CD8-positive, alpha-beta T cell (primary cell): ENCODE measurements at regions of chr11 and their contacts with region 1.

Region 1: GRCh38 chr11:113773416-113774173 is at the start of gene ZW10:
- DNase-seq: peak; percentile 79 to 96 (median 91)
- ATAC-seq: peak; percentile 98
- H3K4me3 ChIP-seq: peak within 1 kb of the TSS; percentile 89 to 90
- H3K4me3 Mint-ChIP-seq: peak within 1 kb of the TSS; percentile 99
- H3K27ac ChIP-seq: peak within 1 kb of the TSS; percentile 59 to 73
- H3K27ac Mint-ChIP-seq: peak within 1 kb of the TSS; percentile 89
- H3K4me1 ChIP-seq: peaks cover 3% of the 10 kb centered on the region
- H3K4me1 Mint-ChIP-seq: peaks cover 28% of the 10 kb centered on the region
- H3K27me3 ChIP-seq: no peaks in the 10 kb centered on the region
- H3K27me3 Mint-ChIP-seq: no peaks in the 10 kb centered on the region
- CTCF ChIP-seq: peak; percentile 96
- total RNA-seq, gene ZW10: 2.6 to 2.8 TPM

Region 2: DNA sequence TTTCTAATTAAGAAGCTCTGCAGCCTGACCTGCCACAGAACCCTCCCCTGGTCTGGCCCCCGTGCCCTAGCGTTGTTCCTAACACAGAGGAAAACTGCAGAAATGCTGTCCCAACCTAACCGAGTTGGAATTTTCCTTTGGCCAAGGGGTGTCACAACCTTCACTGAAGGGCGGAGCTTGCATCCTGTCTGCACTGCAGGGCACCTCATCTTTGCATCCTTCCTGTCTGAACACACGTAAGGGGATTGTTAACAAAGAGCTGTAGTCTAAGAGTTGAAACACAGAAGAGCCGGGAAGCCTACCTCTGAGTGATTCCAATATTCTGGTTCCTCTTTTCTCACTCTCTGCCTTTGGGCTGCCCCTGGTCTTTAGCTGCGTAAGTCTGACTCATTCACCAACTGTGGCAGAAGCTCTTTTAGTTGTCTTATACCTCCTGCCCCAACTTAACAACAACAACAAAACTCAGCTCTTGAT is 1834.9 kb before region 1 on chr11:
- CTCF ChIA-PET with region 1: no interaction called
- POLR2A ChIA-PET with region 1: no interaction called
- intact Hi-C with region 1: loop called in 1 of 2 experiments (anchors 10 kb)
- DNase-seq: peak in 5 of 9 experiments; percentile 23 to 56 (median 34)
- ATAC-seq: peak; percentile 57
- H3K4me3 ChIP-seq: no peak overlapping the region
- H3K4me3 Mint-ChIP-seq: peak overlapping the region; percentile 80
- H3K27ac ChIP-seq: peak overlapping the region in 1 of 2 experiments; percentile 45
- H3K27ac Mint-ChIP-seq: peak overlapping the region; percentile 75
- H3K4me1 ChIP-seq: peaks cover 31% of the 10 kb centered on the region
- H3K4me1 Mint-ChIP-seq: peaks cover 36% of the 10 kb centered on the region
- H3K27me3 ChIP-seq: no peaks in the 10 kb centered on the region
- H3K27me3 Mint-ChIP-seq: no peaks in the 10 kb centered on the region
- CTCF ChIP-seq: no peak

Region 3: DNA sequence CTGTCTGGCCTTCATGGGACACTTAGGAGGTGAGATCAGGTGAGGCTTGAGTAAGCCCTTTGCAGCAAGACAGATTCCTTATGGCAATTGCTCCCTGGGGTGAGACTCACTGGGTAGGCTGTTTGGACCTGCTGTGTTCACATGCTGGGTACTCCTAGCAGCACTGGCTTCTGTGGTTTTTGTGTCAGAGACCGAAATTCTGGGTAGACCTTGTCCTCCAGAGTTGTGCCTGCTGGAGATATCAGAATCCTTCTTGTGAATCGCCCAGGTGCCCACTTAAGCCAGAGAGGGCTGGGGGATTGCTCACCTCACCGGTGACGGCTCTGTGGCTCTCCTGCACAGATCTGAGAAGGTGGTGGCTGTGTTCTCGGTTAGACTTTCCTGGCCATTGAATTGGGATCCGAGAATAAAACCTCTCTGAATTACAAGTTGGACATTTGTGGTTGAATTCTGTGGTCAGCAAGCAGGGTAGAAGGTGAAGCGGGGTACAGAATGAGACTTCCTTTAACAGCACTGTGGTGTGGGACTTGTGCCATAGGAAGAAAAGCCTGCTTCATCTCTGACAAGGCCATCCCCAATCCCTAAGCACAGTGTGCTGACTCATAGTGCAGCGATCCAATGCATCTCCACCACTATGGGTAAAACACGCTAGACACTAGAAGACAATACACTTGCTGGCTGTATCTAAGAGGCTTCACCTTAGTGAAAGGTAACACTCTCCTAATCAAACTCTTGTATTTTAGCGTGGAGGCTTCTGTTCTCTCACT is 511.7 kb before region 1 on chr11:
- CTCF ChIA-PET with region 1: no interaction called
- POLR2A ChIA-PET with region 1: no interaction called
- intact Hi-C with region 1: no loop called
- DNase-seq: no peak
- ATAC-seq: no peak
- H3K4me3 ChIP-seq: no peak overlapping the region
- H3K4me3 Mint-ChIP-seq: no peak overlapping the region
- H3K27ac ChIP-seq: no peak overlapping the region
- H3K27ac Mint-ChIP-seq: no peak overlapping the region
- H3K4me1 ChIP-seq: no peaks in the 10 kb centered on the region
- H3K4me1 Mint-ChIP-seq: no peaks in the 10 kb centered on the region
- H3K27me3 ChIP-seq: no peaks in the 10 kb centered on the region
- H3K27me3 Mint-ChIP-seq: peaks cover 7% of the 10 kb centered on the region
- CTCF ChIP-seq: no peak

Region 4: GRCh38 chr11:113314389-113315301 is 458.9 kb before region 1 on chr11 and contains the start of gene TTC12:
- CTCF ChIA-PET with region 1: no interaction called
- POLR2A ChIA-PET with region 1: no interaction called
- intact Hi-C with region 1: loop called (anchors 2 to 5 kb)
- DNase-seq: peak; percentile 82 to 95 (median 90)
- ATAC-seq: peak; percentile 98
- H3K4me3 ChIP-seq: peak within 1 kb of the TSS; percentile 59 to 66
- H3K4me3 Mint-ChIP-seq: peak within 1 kb of the TSS; percentile 82
- H3K27ac ChIP-seq: peak within 1 kb of the TSS; percentile 81 to 87
- H3K27ac Mint-ChIP-seq: peak within 1 kb of the TSS; percentile 85
- H3K4me1 ChIP-seq: peaks cover 17% of the 10 kb centered on the region
- H3K4me1 Mint-ChIP-seq: peaks cover 30% of the 10 kb centered on the region
- H3K27me3 ChIP-seq: no peaks in the 10 kb centered on the region
- H3K27me3 Mint-ChIP-seq: no peaks in the 10 kb centered on the region
- CTCF ChIP-seq: no peak
- total RNA-seq, gene TTC12: 8.6 to 10.8 TPM

Region 5: GRCh38 chr11:114439229-114440120 is 665.9 kb after region 1 on chr11 and contains the start of gene REXO2:
- CTCF ChIA-PET with region 1: no interaction called
- POLR2A ChIA-PET with region 1: no interaction called
- intact Hi-C with region 1: loop called in 1 of 2 experiments (anchors 2 kb)
- DNase-seq: peak; percentile 86 to 98 (median 94)
- ATAC-seq: peak; percentile 99
- H3K4me3 ChIP-seq: peak within 1 kb of the TSS; percentile 86 to 99
- H3K4me3 Mint-ChIP-seq: peak within 1 kb of the TSS; percentile 98
- H3K27ac ChIP-seq: peak within 1 kb of the TSS; percentile 58 to 66
- H3K27ac Mint-ChIP-seq: peak within 1 kb of the TSS; percentile 91
- H3K4me1 ChIP-seq: peaks cover 16% of the 10 kb centered on the region
- H3K4me1 Mint-ChIP-seq: peaks cover 30% of the 10 kb centered on the region
- H3K27me3 ChIP-seq: no peaks in the 10 kb centered on the region
- H3K27me3 Mint-ChIP-seq: no peaks in the 10 kb centered on the region
- CTCF ChIP-seq: no peak
- total RNA-seq, gene REXO2: 18.8 to 19.9 TPM